ENCODE measurements at regions of chr5 and their contacts with region 1.

Region 1: DNA sequence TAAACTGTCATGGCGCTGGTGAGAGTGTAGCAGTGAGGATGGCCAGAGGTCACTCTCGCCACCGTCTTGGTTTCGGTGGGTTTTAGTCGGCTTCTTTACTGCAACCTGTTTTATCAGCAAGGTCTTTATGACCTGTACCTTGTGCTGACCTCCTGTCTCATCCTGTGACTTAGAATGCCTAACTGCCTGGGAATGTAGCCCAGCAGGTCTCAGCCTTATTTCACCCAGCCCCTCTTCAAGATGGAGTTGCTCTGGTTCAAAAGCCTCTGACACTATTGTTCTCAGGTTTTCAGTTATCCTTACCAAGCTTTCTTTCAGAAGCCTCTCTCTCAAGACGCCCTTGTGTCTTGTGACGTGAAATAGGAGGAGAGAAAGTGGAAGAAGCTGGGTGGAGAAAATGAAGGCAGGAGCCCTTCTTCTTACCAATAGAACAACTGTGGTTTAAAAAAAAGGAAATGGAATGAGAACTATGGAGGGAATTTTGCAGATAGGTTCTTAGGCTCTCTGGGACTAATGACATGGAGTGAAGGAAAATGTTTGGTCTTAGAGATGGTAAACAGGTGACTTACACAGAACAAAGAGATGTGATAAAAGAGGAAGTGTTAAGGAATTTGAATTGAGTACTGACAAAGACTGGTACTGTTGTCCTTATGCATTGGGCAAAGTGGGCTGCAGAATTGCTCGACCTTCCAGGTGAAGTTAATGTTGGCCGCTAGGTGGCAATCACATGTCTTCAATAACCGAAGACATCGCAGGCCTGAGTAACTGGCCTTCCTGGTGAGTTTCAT is 133.3 kb upstream of the RAI14 start:
- DNase-seq: peak; percentile 80 to 86
- ATAC-seq: peak; percentile 94 to 96
- H3K4me3 ChIP-seq: no peak overlapping the region
- H3K27ac ChIP-seq: peak overlapping the region; percentile 68 to 82
- H3K4me1 ChIP-seq: peaks cover 40% of the 10 kb centered on the region
- CTCF ChIP-seq: peak; percentile 85
- EP300 ChIP-seq: no peak
- POLR2A ChIP-seq: no peak
- RAD21 ChIP-seq: peak; percentile 95 to 97

Region 2: DNA sequence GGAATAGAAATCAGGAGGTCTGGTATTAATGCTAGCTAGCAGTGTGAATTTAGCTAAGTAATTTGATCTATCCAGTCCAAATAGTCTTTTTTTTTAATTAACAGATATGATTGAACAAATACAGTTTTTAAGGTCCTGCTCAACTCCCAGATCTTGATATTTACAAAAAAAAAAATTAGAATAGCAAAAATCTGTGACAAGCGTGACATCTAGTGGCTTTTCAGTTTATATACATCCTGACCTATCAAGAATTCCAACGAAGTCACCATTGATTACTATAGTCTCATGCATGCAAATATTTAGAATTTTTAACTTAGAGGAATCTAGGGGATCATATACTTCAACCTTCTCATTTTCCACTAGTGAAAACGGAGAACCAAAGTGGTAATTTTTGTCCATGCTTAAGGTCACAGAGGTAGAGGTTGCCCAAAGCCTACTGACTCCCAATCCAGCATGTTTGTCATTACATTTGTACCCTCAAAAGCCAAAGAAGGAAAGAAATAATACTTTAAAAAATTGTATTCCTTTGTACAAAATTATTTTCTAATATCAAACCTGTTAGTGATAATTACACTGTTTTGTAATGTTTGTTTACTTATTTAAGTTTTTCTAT is 1099.7 kb before region 1 on chr5:
- CTCF ChIA-PET with region 1: no interaction called
- POLR2A ChIA-PET with region 1: no interaction called
- DNase-seq: peak in 1 of 2 experiments; percentile 39
- ATAC-seq: peak; percentile 56 to 61; a peak in 4 of 6 replicates
- H3K4me3 ChIP-seq: no peak overlapping the region
- H3K27ac ChIP-seq: no peak overlapping the region
- H3K4me1 ChIP-seq: no peaks in the 10 kb centered on the region
- CTCF ChIP-seq: peak; percentile 80
- EP300 ChIP-seq: no peak
- POLR2A ChIP-seq: no peak
- RAD21 ChIP-seq: peak; percentile 76 to 87

Region 3: GRCh38 chr5:34459908-34460307 is 62.9 kb before region 1 on chr5:
- CTCF ChIA-PET with region 1: no interaction called
- POLR2A ChIA-PET with region 1: no interaction called
- DNase-seq: no peak
- ATAC-seq: no peak
- H3K4me3 ChIP-seq: no peak overlapping the region
- H3K27ac ChIP-seq: no peak overlapping the region
- H3K4me1 ChIP-seq: no peaks in the 10 kb centered on the region
- CTCF ChIP-seq: no peak
- EP300 ChIP-seq: no peak
- POLR2A ChIP-seq: no peak
- RAD21 ChIP-seq: no peak

Region 4: GRCh38 chr5:34499001-34499734 is 23.6 kb before region 1 on chr5:
- CTCF ChIA-PET with region 1: interaction called, 19 read pairs
- POLR2A ChIA-PET with region 1: no interaction called
- DNase-seq: peak in 1 of 2 experiments; percentile 31
- ATAC-seq: peak; percentile 72 to 82
- H3K4me3 ChIP-seq: no peak overlapping the region
- H3K27ac ChIP-seq: peak overlapping the region; percentile 53 to 80; a peak in 5 of 6 replicates
- H3K4me1 ChIP-seq: peaks cover 32% of the 10 kb centered on the region
- CTCF ChIP-seq: no peak
- EP300 ChIP-seq: no peak
- POLR2A ChIP-seq: no peak
- RAD21 ChIP-seq: no peak

Region 5: GRCh38 chr5:34533582-34534522 is 11.1 kb after region 1 on chr5:
- CTCF ChIA-PET with region 1: interaction called, 29 read pairs
- POLR2A ChIA-PET with region 1: no interaction called
- DNase-seq: no peak
- ATAC-seq: no peak
- H3K4me3 ChIP-seq: no peak overlapping the region
- H3K27ac ChIP-seq: peak overlapping the region in 1 of 2 experiments; percentile 2; a peak in 1 of 6 replicates
- H3K4me1 ChIP-seq: peaks cover 17% of the 10 kb centered on the region; the same call in 2 of the 3 replicates
- CTCF ChIP-seq: no peak
- EP300 ChIP-seq: no peak
- POLR2A ChIP-seq: no peak
- RAD21 ChIP-seq: no peak

Region 6: GRCh38 chr5:34608859-34609648 is 86.3 kb after region 1 on chr5:
- CTCF ChIA-PET with region 1: interaction called, 13 read pairs
- POLR2A ChIA-PET with region 1: interaction called, 4 read pairs
- DNase-seq: peak; percentile 55 to 69
- ATAC-seq: peak; percentile 84 to 85
- H3K4me3 ChIP-seq: no peak overlapping the region
- H3K27ac ChIP-seq: peak overlapping the region; percentile 76 to 90
- H3K4me1 ChIP-seq: peaks cover 41% of the 10 kb centered on the region
- CTCF ChIP-seq: no peak
- EP300 ChIP-seq: 0 out of 5 replicates have a peak, but pooled peaks of 1 of the 2 experiments have one; percentile 29
- POLR2A ChIP-seq: no peak
- RAD21 ChIP-seq: peak in 1 of 2 experiments; percentile 21; a peak in 1 of 5 replicates

Region 7: DNA sequence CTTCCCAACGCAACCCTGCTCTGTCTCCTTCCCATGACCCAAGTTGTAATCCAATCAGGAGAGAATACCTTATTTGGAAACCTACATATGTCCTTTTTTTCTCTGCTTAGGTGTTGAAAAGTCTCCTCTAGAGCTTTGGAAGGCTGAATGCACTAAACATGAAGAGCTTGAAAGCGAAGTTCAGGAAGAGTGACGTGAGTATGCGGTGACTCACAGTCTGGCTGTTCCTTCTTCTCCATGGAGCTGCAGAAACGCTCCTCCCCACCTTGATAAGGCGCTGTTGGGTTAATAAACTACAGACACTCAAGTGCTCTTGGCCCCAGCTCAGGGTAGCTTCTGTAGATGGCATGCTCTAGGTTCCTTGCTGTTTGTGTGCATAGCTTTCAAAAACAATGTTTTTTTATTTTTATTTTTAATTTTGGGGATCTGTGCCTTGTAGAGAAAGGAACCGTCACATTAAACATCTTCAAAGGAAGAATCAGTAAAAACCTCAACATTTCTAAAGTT is 164.0 kb after region 1 on chr5:
- CTCF ChIA-PET with region 1: interaction called, 21 read pairs
- POLR2A ChIA-PET with region 1: interaction called, 4 read pairs
- DNase-seq: peak; percentile 71 to 99
- ATAC-seq: peak; percentile 88 to 95
- H3K4me3 ChIP-seq: peak overlapping the region; percentile 32; the same call in 2 of the 3 replicates
- H3K27ac ChIP-seq: peak overlapping the region; percentile 85 to 93
- H3K4me1 ChIP-seq: peaks cover 91% of the 10 kb centered on the region
- CTCF ChIP-seq: no peak
- EP300 ChIP-seq: peak; percentile 67 to 75; a peak in 2 of 5 replicates
- POLR2A ChIP-seq: no peak
- RAD21 ChIP-seq: peak; percentile 30 to 40; a peak in 4 of 5 replicates